GM13977 (cell line): ENCODE measurements at regions of chr21 and their contacts with region 1.

Region 1: DNA sequence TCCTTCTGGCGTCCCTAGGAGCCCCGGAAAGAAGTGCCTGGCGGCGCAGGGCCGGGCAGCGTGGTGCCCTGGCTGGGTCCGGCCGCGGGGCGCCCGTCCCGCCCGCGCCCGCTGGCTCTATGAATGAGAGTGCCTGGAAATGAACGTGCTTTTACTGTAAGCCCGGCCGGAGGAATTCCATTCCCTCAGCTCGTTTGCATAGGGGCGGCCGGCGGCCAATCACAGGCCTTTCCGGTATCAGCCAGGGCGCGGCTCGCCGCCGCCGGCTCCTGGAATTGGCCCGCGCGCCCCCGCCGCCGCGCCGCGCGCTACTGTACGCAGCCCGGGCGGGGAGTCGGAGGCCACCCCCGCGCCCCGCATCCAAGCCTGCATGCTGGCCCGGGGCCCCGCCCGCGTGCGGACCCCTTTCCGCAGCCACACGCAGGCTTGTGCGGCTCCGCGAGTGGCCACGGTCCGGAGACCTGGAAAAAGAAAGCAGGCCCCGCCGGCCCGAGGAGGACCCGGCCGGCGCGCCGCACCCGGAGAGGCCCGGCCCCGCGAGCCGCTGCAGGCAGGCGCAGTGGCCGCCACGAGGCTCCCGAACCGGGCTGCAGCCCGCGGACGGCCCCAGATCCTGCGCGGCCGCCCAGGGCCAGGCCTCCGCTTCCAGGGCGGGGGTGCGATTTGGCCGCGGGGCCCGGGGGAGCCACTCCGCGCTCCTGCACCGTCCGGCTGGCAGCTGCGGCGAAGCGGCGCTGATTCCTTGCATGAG is 160.4 kb downstream of the RUNX1 start:
- DNase-seq: peak; percentile 92
- CTCF ChIP-seq: no peak

Region 2: GRCh38 chr21:34693192-34693810 is 195.4 kb before region 1 on chr21:
- in situ Hi-C with region 1: loop called (anchors 25 kb)
- DNase-seq: peak; percentile 62
- CTCF ChIP-seq: peak; percentile 68

Region 3: GRCh38 chr21:34836103-34836932 is 52.4 kb before region 1 on chr21:
- in situ Hi-C with region 1: no loop called
- DNase-seq: no peak
- CTCF ChIP-seq: no peak

Region 4: DNA sequence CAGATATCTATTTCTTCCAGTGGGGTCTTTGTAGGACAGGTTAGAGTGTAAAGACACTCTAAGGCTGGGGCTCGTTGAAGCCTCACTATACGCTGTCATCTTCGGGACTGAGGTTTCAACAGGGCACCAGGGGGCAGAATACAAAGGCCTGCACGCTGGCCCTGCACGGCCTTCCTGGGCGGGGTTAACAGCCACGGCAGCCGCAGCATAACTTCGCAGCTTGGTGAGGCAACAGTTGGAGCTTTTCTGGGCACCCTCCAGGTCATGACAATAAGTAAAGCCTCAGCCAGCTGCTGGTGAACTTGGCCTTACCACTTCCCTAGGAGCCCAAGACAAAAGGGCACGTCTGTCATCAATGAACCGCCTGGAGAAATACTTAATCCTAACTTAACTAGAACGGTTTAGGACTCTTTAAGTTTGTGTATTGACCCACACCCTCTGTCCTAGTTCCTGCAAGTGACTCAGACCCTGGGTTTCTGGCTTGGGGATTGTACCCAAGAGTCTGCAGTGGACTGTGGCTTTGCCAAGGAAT is 162.6 kb after region 1 on chr21:
- in situ Hi-C with region 1: loop called (anchors 10 kb)
- DNase-seq: peak; percentile 59
- CTCF ChIP-seq: peak; percentile 58

Region 5: DNA sequence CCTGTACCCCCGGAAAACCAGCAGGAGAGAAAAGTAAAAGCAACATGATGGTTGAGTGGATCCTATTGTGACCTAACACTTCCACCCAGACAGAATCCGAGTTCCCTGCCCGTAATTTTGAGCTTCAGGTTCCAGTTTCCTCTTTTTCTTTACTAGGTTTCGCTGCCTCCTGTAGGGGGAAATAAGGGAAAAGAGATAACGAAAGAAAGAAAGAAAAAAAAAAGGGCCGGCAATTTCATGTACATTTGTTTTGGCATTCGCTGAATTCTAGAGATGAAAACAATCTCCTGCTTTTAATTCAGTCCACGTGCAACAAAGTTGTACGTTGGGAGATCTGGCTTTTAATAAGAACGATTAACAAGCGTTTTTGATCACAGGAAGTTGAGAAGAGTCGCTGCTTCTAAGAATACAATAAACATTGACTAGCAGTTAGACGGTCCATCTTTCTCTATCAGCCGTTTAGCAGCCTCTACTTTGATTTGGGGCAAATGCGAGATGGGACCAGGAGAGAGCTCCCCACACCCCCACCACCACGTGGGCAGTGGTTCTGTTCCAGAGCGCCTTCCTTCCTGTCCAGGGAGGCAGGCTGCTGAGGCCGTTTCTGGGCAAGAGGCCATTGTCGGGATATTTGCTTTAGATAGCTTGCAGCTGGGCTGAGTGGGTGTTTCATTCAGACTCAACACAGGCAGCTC is 316.3 kb after region 1 on chr21:
- in situ Hi-C with region 1: loop called (anchors 25 kb)
- DNase-seq: no peak
- CTCF ChIP-seq: no peak

Region 6: GRCh38 chr21:35400233-35400957 is 511.7 kb after region 1 on chr21:
- in situ Hi-C with region 1: loop called (anchors 10 kb)
- DNase-seq: peak; percentile 69
- CTCF ChIP-seq: peak; percentile 74